Endothelial cell of umbilical vein (primary cell): ENCODE measurements at regions of chr2 and their contacts with region 1.

Region 1: GRCh38 chr2:16507655-16508489 is 157.8 kb downstream of the CYRIA start:
- DNase-seq: peak; percentile 39
- H3K4me3 ChIP-seq: peak overlapping the region in 1 of 3 experiments; percentile 16
- H3K27ac ChIP-seq: no peak overlapping the region
- H3K4me1 ChIP-seq: no peaks in the 10 kb centered on the region
- H3K27me3 ChIP-seq: peaks cover 19 to 27% of the 10 kb centered on the region in 2 experiments
- CTCF ChIP-seq: peak; percentile 47 to 80
- POLR2A ChIP-seq: no peak

Region 2: DNA sequence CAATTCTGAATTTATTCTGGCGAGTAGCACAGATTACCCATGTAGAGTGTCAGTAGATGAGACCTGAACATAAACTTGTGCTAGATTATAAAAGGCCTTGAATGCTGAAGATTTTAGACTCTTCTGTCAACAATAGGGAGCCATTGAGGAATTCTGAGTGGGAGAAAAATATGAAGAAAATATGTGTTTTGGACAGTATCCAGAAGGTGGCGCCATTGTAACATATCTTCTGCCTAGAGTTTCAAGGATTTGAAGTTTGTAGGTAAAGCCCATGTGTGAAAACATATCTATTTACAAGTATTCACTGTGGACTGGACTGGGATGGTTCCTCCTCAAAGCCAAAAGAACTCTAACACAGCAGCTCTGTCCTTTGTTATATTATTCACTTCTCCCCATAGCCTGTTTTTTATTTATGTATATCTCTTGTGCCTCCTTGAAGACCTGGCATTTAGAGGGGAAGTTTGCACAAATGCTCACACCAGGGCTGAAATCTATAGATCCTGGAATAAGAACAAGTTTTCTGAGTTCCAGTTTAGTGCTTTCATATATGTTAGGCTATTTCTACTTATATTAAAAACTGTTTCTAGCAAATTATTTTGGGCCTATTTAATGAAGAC is 1927.7 kb after region 1 on chr2:
- CTCF ChIA-PET with region 1: no interaction called
- POLR2A ChIA-PET with region 1: no interaction called
- dilution Hi-C with region 1: no loop called
- intact Hi-C with region 1: loop called (anchors 5 kb)
- DNase-seq: peak; percentile 75
- H3K4me3 ChIP-seq: no peak overlapping the region
- H3K27ac ChIP-seq: no peak overlapping the region
- H3K4me1 ChIP-seq: peaks cover 5% of the 10 kb centered on the region
- H3K27me3 ChIP-seq: no peaks in the 10 kb centered on the region
- CTCF ChIP-seq: peak; percentile 39 to 51
- POLR2A ChIP-seq: no peak